ENCODE measurements at regions of chr18 and their contacts with region 1.

Region 1: GRCh38 chr18:79439201-79440023 is 43.7 kb downstream of the NFATC1 start:
- DNase-seq: peak; percentile 75 to 92
- ATAC-seq: peak; percentile 80 to 85 (median 82)
- H3K4me3 ChIP-seq: peak overlapping the region; percentile 32
- H3K27ac ChIP-seq: peak overlapping the region; percentile 85
- H3K4me1 ChIP-seq: peaks cover 33% of the 10 kb centered on the region
- H3K27me3 ChIP-seq: no peaks in the 10 kb centered on the region
- CTCF ChIP-seq: no peak

Region 2: DNA sequence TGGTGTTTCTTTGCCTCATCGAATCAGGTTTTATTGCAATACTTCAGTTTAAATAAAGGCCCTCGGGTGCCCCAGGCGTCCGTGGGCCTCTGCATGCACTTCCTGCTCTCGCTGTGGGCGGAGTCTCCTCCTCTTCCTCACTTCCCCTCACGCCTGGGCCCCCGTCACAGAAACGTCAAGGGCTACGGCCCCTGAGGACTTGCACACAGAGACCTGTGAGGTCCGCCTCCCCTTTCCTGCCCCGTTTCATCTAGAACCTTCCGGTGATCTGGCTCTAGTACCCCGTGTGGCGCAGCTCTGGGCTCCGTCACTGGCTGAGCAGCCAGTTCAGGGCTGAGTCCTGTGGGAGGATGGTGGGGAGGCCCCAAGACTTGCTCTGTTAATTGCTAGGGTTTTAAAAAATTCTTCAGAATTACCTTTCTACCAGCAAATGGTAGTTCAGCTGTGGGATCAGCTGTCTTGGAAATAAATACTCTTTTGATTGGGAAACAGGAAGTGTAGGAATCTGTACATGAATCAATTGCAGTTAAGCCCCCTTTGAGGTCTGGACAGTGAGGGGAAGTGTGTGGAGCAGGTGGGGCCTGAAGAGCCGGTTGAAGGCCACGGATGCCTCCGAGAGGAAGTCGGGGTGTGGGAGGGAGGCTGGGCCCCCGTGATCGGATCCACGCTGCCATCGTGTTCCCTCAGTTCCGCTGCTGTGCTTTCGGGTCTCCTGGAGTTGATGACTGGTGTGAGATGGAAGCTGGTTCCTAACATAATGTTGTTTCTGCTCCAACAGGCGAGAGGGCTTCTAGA is 33.4 kb before region 1 on chr18:
- intact Hi-C with region 1: loop called (anchors 2 kb)
- DNase-seq: peak in 1 of 2 donors; percentile 85
- ATAC-seq: no peak
- H3K4me3 ChIP-seq: peak overlapping the region; percentile 7
- H3K27ac ChIP-seq: peak overlapping the region; percentile 94
- H3K4me1 ChIP-seq: peaks cover 50% of the 10 kb centered on the region
- H3K27me3 ChIP-seq: no peaks in the 10 kb centered on the region
- CTCF ChIP-seq: no peak

Measured in psoas muscle (tissue), 8 donors.